HCT116 (cell line): ENCODE measurements at regions of chr10 and their contacts with region 1.

Region 1: GRCh38 chr10:44358080-44358771 is 26.7 kb downstream of the CXCL12 start:
- DNase-seq: no peak
- ATAC-seq: no peak
- H3K4me3 ChIP-seq: no peak overlapping the region
- H3K27ac ChIP-seq: no peak overlapping the region
- H3K4me1 ChIP-seq: no peaks in the 10 kb centered on the region
- H3K27me3 ChIP-seq: peaks cover 33% of the 10 kb centered on the region
- CTCF ChIP-seq: no peak
- POLR2A ChIP-seq: no peak
- RAD21 ChIP-seq: no peak

Region 2: DNA sequence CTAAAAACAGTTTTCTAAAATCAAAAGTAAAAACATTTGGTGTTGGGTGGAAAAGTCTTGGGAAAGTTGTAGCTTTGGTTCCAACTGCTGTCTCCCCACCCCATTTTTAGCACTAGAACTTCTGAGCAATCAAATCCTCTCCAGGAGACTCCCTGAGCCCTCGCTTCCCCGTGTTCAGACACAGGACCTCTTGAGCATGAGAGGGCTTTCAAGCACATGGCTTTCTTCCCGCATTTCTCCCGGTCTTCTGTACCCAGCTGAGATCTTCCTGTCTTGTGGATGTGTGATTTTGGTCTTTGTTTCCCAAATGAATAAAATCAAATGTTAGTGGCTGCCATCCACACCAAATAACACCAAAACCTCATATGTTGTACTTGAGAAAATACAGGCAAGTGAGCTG is 21.7 kb after region 1 on chr10:
- CTCF ChIA-PET with region 1: no interaction called
- POLR2A ChIA-PET with region 1: no interaction called
- RAD21 ChIA-PET with region 1: no interaction called
- intact Hi-C with region 1: loop called (anchors 2 kb)
- DNase-seq: no peak
- ATAC-seq: no peak
- H3K4me3 ChIP-seq: no peak overlapping the region
- H3K27ac ChIP-seq: no peak overlapping the region
- H3K4me1 ChIP-seq: no peaks in the 10 kb centered on the region
- H3K27me3 ChIP-seq: no peaks in the 10 kb centered on the region
- CTCF ChIP-seq: no peak
- POLR2A ChIP-seq: no peak
- RAD21 ChIP-seq: no peak

Region 3: DNA sequence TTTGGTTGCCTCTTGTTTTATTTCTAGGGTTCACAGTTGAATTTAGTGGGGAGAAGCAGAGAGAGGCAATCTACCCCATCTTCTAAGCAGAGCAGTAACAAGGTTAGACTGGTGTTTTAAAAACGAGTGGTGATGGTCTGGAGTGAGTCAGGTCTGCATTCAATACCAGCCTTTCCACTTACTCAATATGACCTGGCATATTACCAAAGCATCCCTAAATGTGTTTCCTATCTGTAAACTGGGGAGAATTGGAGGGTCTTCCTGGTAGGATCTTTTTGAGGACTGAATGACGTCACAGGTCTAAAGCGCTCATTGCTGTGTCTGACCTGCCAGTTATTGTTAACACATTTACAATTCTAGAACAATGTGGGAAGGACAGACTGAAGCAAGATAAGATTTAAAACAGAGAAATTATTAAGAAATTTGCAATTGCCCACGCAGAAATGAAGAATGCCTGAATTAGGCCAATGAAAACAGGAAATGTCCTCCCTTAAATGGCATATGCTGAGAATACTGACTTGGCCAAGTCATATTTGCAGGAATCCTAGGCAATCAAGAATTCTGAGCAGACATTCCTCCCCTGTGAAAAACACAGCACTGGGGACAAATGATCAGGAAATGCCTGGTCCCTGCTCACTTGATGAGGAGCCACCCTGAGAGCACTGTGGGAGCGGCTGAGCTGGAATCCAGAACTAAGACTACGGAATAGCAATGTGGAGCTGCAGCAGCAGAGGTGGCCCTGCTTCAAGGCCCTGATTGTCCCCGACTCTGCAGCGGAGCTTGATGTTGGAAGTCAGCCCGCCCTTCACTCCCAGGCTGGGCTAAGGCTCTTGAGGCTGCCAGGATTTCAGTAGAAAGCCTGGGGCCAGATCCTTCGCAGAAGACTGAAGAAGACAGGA is 211.2 kb after region 1 on chr10:
- CTCF ChIA-PET with region 1: no interaction called
- POLR2A ChIA-PET with region 1: no interaction called
- RAD21 ChIA-PET with region 1: no interaction called
- intact Hi-C with region 1: no loop called
- DNase-seq: no peak
- ATAC-seq: no peak
- H3K4me3 ChIP-seq: no peak overlapping the region
- H3K27ac ChIP-seq: no peak overlapping the region
- H3K4me1 ChIP-seq: no peaks in the 10 kb centered on the region
- H3K27me3 ChIP-seq: peaks cover 6% of the 10 kb centered on the region
- CTCF ChIP-seq: no peak
- POLR2A ChIP-seq: no peak
- RAD21 ChIP-seq: no peak